OCI-LY7 (cell line): ENCODE measurements at regions of chr17 and their contacts with region 1.

Region 1: DNA sequence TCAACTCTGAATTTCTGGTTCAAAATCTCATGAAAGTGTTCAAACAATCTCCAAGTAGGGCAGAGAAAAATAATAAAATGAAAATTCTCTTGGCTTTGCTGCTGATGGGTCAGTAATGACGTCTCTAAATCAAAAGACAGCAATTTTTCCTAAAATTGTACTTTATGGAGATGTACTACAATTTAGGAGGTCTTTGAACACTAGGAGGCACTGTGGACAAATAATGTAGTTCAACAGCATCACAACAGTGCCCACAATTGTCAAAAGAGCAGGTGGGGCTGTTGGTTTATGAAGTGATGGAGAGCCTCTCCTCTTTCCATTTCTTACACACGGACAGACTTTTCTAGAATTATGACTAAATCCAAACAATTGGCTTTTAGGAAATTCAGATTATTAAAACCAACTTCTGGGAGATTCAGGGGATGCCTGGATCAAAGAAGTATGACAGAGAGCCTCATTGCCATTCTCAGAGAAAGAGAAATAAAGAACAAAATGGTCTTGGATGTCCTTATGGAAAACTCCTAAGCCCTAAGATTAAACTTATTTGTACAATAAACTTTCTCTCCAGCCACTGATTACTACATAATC is 23.8 kb downstream of the EZH1 start:
- DNase-seq: peak; percentile 84
- H3K4me3 ChIP-seq: no peak overlapping the region
- H3K27ac ChIP-seq: no peak overlapping the region
- H3K4me1 ChIP-seq: no peaks in the 10 kb centered on the region
- CTCF ChIP-seq: peak; percentile 94

Region 2: GRCh38 chr17:42760652-42761581 is 39.8 kb after region 1 on chr17 and contains the start of gene RAMP2:
- CTCF ChIA-PET with region 1: interaction called, 4 read pairs
- POLR2A ChIA-PET with region 1: interaction called, 3 read pairs
- intact Hi-C with region 1: loop called (anchors 1 kb)
- DNase-seq: no peak
- H3K4me3 ChIP-seq: no peak within 1 kb of the TSS
- H3K27ac ChIP-seq: no peak within 1 kb of the TSS
- H3K4me1 ChIP-seq: peaks cover 9% of the 10 kb centered on the region
- CTCF ChIP-seq: no peak
- total RNA-seq, gene RAMP2: not detected in 2 replicates